IMR-90 (cell line): ENCODE measurements at regions of chr10 and their contacts with region 1.

Region 1: GRCh38 chr10:117518246-117518645 is 24.3 kb upstream of the EMX2 start:
- DNase-seq: no peak
- ATAC-seq: no peak
- H3K4me3 ChIP-seq: no peak overlapping the region
- H3K27ac ChIP-seq: no peak overlapping the region
- H3K4me1 ChIP-seq: no peaks in the 10 kb centered on the region
- H3K27me3 ChIP-seq: no peaks in the 10 kb centered on the region
- CTCF ChIP-seq: no peak
- POLR2A ChIP-seq: no peak
- RAD21 ChIP-seq: no peak

Region 2: DNA sequence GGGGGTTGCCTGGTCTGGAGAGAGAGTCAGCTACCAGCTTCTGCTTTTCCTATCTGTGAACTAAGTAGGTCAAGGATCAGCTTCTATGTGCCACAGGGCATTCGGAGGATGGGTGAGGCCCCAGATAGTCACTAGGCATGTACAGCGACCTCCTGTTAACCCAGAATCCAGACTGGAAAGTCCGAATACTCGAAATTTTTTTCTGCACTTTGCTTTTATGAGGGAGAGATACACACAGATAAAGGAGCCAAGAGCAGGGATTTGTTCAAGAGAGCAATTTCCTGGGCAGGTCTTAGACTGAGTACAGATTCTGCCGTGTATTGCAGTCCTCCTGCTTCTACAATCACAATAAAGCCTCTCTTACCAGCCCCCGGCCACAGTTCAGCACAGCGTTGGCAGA is 78.5 kb after region 1 on chr10:
- CTCF ChIA-PET with region 1: no interaction called
- POLR2A ChIA-PET with region 1: no interaction called
- dilution Hi-C with region 1: no loop called
- in situ Hi-C with region 1: no loop called
- intact Hi-C with region 1: no loop called
- DNase-seq: no peak
- ATAC-seq: no peak
- H3K4me3 ChIP-seq: no peak overlapping the region
- H3K27ac ChIP-seq: no peak overlapping the region
- H3K4me1 ChIP-seq: no peaks in the 10 kb centered on the region
- H3K27me3 ChIP-seq: no peaks in the 10 kb centered on the region
- CTCF ChIP-seq: no peak
- POLR2A ChIP-seq: no peak
- RAD21 ChIP-seq: no peak

Region 3: DNA sequence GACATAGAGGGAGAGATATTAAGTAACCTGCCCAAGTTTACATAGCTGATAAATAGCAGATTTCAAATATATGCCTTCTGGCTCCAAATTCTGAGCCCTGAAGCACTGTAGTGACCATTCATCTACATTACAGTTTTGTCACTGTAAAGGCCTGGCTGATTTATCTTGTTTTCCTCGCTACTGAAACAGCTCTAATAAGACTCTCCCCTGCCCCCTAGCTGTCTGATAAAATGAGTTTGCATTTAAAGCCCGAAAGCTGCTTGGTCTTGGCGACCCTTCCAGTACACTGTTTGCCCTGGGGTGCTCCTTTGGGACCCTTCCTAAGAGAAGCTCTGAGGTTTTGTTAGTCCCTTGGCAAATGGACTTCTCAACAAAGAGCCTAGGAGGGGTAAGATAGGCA is 588.2 kb after region 1 on chr10:
- CTCF ChIA-PET with region 1: no interaction called
- POLR2A ChIA-PET with region 1: no interaction called
- dilution Hi-C with region 1: no loop called
- in situ Hi-C with region 1: no loop called
- intact Hi-C with region 1: loop called (anchors 1 kb)
- DNase-seq: peak; percentile 21
- ATAC-seq: peak; percentile 44; the same call in 1 of the 2 replicates
- H3K4me3 ChIP-seq: no peak overlapping the region
- H3K27ac ChIP-seq: no peak overlapping the region
- H3K4me1 ChIP-seq: no peaks in the 10 kb centered on the region
- H3K27me3 ChIP-seq: no peaks in the 10 kb centered on the region
- CTCF ChIP-seq: peak; percentile 44
- POLR2A ChIP-seq: no peak
- RAD21 ChIP-seq: peak; percentile 48